Endothelial cell of umbilical vein (primary cell): ENCODE measurements at regions of chr17 and their contacts with region 1.

Region 1: GRCh38 chr17:19362277-19363113 is at the start of gene B9D1:
- DNase-seq: peak; percentile 93
- H3K4me3 ChIP-seq: peak within 1 kb of the TSS; percentile 53 to 66 (median 60)
- H3K27ac ChIP-seq: peak within 1 kb of the TSS; percentile 49
- H3K4me1 ChIP-seq: peaks cover 8% of the 10 kb centered on the region
- H3K27me3 ChIP-seq: no peaks in the 10 kb centered on the region
- CTCF ChIP-seq: peak; percentile 88 to 95
- POLR2A ChIP-seq: peak; percentile 10
- total RNA-seq, gene B9D1: 17.9 and 20.5 TPM in 2 replicates

Region 2: GRCh38 chr17:19377602-19378392 is 15.3 kb after region 1 on chr17:
- CTCF ChIA-PET with region 1: interaction called, 62 read pairs
- POLR2A ChIA-PET with region 1: interaction called, 15 read pairs
- dilution Hi-C with region 1: no loop called
- intact Hi-C with region 1: loop called (anchors 1 kb)
- DNase-seq: peak; percentile 100
- H3K4me3 ChIP-seq: peak overlapping the region; percentile 72 to 94 (median 73)
- H3K27ac ChIP-seq: peak overlapping the region; percentile 59
- H3K4me1 ChIP-seq: peaks cover 7% of the 10 kb centered on the region
- H3K27me3 ChIP-seq: no peaks in the 10 kb centered on the region
- CTCF ChIP-seq: no peak
- POLR2A ChIP-seq: peak; percentile 83

Region 3: GRCh38 chr17:19470532-19471261 is 108.2 kb after region 1 on chr17:
- CTCF ChIA-PET with region 1: interaction called, 22 read pairs
- POLR2A ChIA-PET with region 1: no interaction called
- dilution Hi-C with region 1: no loop called
- intact Hi-C with region 1: loop called (anchors 1 kb)
- DNase-seq: no peak
- H3K4me3 ChIP-seq: no peak overlapping the region
- H3K27ac ChIP-seq: no peak overlapping the region
- H3K4me1 ChIP-seq: no peaks in the 10 kb centered on the region
- H3K27me3 ChIP-seq: no peaks in the 10 kb centered on the region
- CTCF ChIP-seq: no peak
- POLR2A ChIP-seq: no peak

Region 4: GRCh38 chr17:19507775-19508576 is 145.5 kb after region 1 on chr17:
- CTCF ChIA-PET with region 1: interaction called, 11 read pairs
- POLR2A ChIA-PET with region 1: no interaction called
- dilution Hi-C with region 1: no loop called
- intact Hi-C with region 1: loop called (anchors 1 kb)
- DNase-seq: peak; percentile 93
- H3K4me3 ChIP-seq: peak overlapping the region; percentile 47 to 82 (median 67)
- H3K27ac ChIP-seq: no peak overlapping the region
- H3K4me1 ChIP-seq: peaks cover 3% of the 10 kb centered on the region
- H3K27me3 ChIP-seq: no peaks in the 10 kb centered on the region
- CTCF ChIP-seq: no peak
- POLR2A ChIP-seq: no peak